OCI-LY7 (cell line): ENCODE measurements at regions of chr18 and their contacts with region 1.

Region 1: GRCh38 chr18:23243178-23243577 is 107.9 kb downstream of the CABLES1 start:
- DNase-seq: peak; percentile 85
- H3K4me3 ChIP-seq: no peak overlapping the region
- H3K27ac ChIP-seq: peak overlapping the region; percentile 95
- H3K4me1 ChIP-seq: peaks cover 61% of the 10 kb centered on the region
- CTCF ChIP-seq: peak; percentile 84

Region 2: GRCh38 chr18:23071285-23071684 is 171.9 kb before region 1 on chr18:
- CTCF ChIA-PET with region 1: no interaction called
- POLR2A ChIA-PET with region 1: no interaction called
- intact Hi-C with region 1: loop called (anchors 5 kb)
- DNase-seq: peak; percentile 95
- H3K4me3 ChIP-seq: peak overlapping the region; percentile 19
- H3K27ac ChIP-seq: peak overlapping the region; percentile 66
- H3K4me1 ChIP-seq: peaks cover 50% of the 10 kb centered on the region
- CTCF ChIP-seq: no peak

Region 3: DNA sequence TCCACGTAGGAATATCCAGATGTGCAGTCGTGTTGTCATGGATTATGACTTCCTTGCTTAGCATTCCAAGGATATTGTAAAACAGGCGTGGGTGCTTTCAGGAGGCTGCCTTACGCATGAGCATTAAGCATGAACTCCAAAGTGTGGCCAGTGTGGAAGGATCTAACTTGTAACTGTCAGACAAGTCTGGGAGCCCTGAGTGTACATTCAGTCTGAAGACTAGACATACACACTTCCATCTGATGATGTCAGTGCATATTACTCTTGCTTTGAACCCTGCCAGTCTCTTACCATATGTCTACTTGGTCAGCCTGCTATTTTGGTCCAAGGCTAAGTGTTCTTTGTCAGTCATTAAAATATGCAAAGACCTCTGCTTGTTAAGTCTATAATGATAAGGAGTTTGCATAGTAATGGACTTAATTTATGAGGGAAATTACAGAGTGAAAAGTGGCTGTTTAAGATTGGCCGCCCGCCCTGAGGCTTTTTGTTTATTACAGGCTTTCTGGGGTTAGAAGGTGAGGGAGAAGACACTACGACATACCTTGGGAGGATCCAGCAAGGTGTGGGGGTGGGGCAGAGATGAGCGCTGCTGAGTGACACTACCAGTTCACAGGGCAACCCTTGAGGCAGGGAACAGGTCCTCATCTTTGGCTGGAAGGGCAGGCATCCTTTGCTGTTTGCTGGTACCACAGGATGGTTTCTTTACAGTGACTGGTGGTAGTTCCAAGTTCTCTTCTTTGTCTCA is 59.6 kb before region 1 on chr18:
- CTCF ChIA-PET with region 1: no interaction called
- POLR2A ChIA-PET with region 1: no interaction called
- intact Hi-C with region 1: loop called (anchors 1 kb)
- DNase-seq: no peak
- H3K4me3 ChIP-seq: no peak overlapping the region
- H3K27ac ChIP-seq: no peak overlapping the region
- H3K4me1 ChIP-seq: peaks cover 56% of the 10 kb centered on the region
- CTCF ChIP-seq: no peak

Region 4: GRCh38 chr18:23253630-23254029 is 10.5 kb after region 1 on chr18:
- CTCF ChIA-PET with region 1: no interaction called
- POLR2A ChIA-PET with region 1: no interaction called
- intact Hi-C with region 1: no loop called
- DNase-seq: no peak
- H3K4me3 ChIP-seq: no peak overlapping the region
- H3K27ac ChIP-seq: no peak overlapping the region
- H3K4me1 ChIP-seq: peaks cover 2% of the 10 kb centered on the region
- CTCF ChIP-seq: no peak

Region 5: DNA sequence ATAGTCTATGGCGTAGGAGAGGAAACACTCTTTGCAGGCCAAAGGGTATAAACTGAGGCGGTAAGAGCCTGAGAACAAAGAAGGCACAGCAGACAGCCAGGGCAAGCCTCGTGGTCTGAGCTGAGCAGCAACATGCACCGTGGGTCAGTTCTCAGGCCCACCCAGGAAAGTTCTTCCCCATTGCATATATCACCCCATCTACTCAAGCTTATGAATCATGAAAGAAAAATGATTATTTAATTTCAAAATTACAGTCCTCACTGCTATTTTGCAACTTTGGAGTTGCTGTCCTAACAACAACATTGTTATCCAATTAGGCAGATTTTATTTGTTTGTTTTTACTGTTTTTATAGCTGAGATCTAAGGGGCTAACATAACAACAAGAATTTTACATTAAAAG is 155.2 kb after region 1 on chr18:
- CTCF ChIA-PET with region 1: no interaction called
- POLR2A ChIA-PET with region 1: no interaction called
- intact Hi-C with region 1: no loop called
- DNase-seq: no peak
- H3K4me3 ChIP-seq: no peak overlapping the region
- H3K27ac ChIP-seq: no peak overlapping the region
- H3K4me1 ChIP-seq: no peaks in the 10 kb centered on the region
- CTCF ChIP-seq: no peak

Region 6: DNA sequence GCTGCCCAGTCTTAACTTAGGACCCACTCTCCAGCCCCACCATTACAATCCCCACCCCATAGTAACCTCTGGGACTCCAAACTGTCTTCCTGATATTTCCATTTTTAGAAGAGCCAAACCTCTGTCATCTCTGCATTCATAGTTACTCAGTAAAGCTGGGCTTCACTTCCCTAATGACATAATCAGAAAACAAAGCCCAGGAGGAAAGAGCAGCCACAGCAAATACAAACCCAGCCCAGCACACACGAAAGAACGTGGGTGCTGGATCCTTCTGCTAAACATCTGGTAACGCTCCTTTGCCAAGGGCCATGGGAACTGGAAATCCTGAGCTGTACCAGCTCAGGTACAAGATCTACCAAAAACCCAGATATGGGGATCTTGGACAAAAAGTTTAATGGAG is 173.1 kb after region 1 on chr18:
- CTCF ChIA-PET with region 1: no interaction called
- POLR2A ChIA-PET with region 1: no interaction called
- intact Hi-C with region 1: loop called (anchors 5 kb)
- DNase-seq: no peak
- H3K4me3 ChIP-seq: no peak overlapping the region
- H3K27ac ChIP-seq: no peak overlapping the region
- H3K4me1 ChIP-seq: peaks cover 23% of the 10 kb centered on the region
- CTCF ChIP-seq: no peak